ENCODE measurements at regions of chr2 and their contacts with region 1.

Region 1: GRCh38 chr2:233061591-233062450 is 1.7 kb downstream of the INPP5D start:
- DNase-seq: peak; percentile 74
- H3K4me3 Mint-ChIP-seq: peak overlapping the region; percentile 98
- H3K27ac Mint-ChIP-seq: peak overlapping the region; percentile 99
- H3K4me1 Mint-ChIP-seq: peaks cover 43% of the 10 kb centered on the region
- H3K27me3 Mint-ChIP-seq: no peaks in the 10 kb centered on the region

Region 2: GRCh38 chr2:232611551-232612218 is 450.1 kb before region 1 on chr2:
- CTCF ChIA-PET with region 1: interaction called, 3 read pairs
- POLR2A ChIA-PET with region 1: no interaction called
- intact Hi-C with region 1: loop called (anchors 5 kb)
- DNase-seq: peak; percentile 79
- H3K4me3 Mint-ChIP-seq: no peak overlapping the region
- H3K27ac Mint-ChIP-seq: no peak overlapping the region
- H3K4me1 Mint-ChIP-seq: no peaks in the 10 kb centered on the region
- H3K27me3 Mint-ChIP-seq: no peaks in the 10 kb centered on the region

Region 3: GRCh38 chr2:232795920-232796319 is 265.9 kb before region 1 on chr2:
- CTCF ChIA-PET with region 1: no interaction called
- POLR2A ChIA-PET with region 1: no interaction called
- intact Hi-C with region 1: no loop called
- DNase-seq: no peak
- H3K4me3 Mint-ChIP-seq: no peak overlapping the region
- H3K27ac Mint-ChIP-seq: no peak overlapping the region
- H3K4me1 Mint-ChIP-seq: no peaks in the 10 kb centered on the region
- H3K27me3 Mint-ChIP-seq: no peaks in the 10 kb centered on the region

Region 4: DNA sequence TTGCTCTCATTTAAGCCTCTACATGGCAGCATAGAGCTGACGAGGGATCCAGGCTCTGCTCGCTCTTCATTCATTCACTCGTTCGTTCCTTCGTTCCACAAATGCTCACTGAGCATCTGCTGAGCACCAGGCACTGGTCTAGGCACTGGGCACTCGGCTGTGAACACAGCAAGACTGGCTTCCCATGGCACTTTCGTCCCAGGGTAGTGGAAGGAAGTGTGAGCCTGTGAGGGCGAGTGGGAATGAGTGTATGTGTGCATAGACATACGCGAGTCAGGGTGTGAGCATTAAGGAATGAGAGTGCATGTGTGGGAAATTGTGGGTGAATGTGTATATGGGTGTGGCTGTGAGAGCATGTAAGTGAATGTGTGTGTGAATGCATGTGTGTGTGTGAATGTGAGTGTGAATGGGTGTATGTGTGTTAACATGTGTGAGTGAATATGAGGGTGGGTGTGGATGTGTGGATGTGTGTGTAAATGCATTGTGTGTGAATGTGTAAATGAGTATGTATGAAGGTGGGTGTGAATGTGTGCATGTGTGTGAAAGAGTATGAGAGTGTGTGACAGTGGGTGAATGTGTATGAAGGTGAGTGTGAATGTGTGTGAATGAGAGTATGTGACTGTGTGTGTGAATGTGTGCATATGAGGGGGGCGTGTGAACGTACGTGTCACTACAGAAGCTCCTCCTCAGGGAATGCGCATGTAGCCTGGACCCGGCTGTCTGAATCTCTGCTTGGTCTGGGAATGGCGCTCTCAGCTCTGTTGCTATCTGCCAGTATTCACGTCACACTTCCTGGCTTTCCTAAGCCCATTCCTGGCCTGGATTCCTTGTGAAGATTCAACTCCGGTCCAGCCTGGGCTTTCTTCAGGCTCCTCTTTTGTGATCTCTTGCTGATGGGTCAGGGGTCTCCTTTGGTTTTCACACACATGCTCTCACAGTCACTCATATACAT is 163.0 kb before region 1 on chr2:
- CTCF ChIA-PET with region 1: no interaction called
- POLR2A ChIA-PET with region 1: interaction called, 4 read pairs
- intact Hi-C with region 1: loop called (anchors 5 kb)
- DNase-seq: peak; percentile 20
- H3K4me3 Mint-ChIP-seq: no peak overlapping the region
- H3K27ac Mint-ChIP-seq: no peak overlapping the region
- H3K4me1 Mint-ChIP-seq: peaks cover 18% of the 10 kb centered on the region
- H3K27me3 Mint-ChIP-seq: peaks cover 3% of the 10 kb centered on the region

Region 5: GRCh38 chr2:233084488-233084887 is 22.7 kb after region 1 on chr2:
- CTCF ChIA-PET with region 1: interaction called, 66 read pairs
- POLR2A ChIA-PET with region 1: interaction called, 145 read pairs
- intact Hi-C with region 1: loop called (anchors 1 kb)
- DNase-seq: peak; percentile 83
- H3K4me3 Mint-ChIP-seq: peak overlapping the region; percentile 70
- H3K27ac Mint-ChIP-seq: peak overlapping the region; percentile 98
- H3K4me1 Mint-ChIP-seq: peaks cover 84% of the 10 kb centered on the region
- H3K27me3 Mint-ChIP-seq: no peaks in the 10 kb centered on the region

Region 6: GRCh38 chr2:233234264-233234663 is 172.4 kb after region 1 on chr2:
- CTCF ChIA-PET with region 1: interaction called, 10 read pairs
- POLR2A ChIA-PET with region 1: interaction called, 4 read pairs
- intact Hi-C with region 1: loop called (anchors 1 kb)
- DNase-seq: peak; percentile 52
- H3K4me3 Mint-ChIP-seq: no peak overlapping the region
- H3K27ac Mint-ChIP-seq: peak overlapping the region; percentile 76
- H3K4me1 Mint-ChIP-seq: peaks cover 47% of the 10 kb centered on the region
- H3K27me3 Mint-ChIP-seq: no peaks in the 10 kb centered on the region

Measured in activated CD4-positive, alpha-beta memory T cell treated with anti-CD3 and anti-CD28 coated beads for 36 hours (primary cell).